ENCODE measurements at regions of chr7 and their contacts with region 1.

Region 1: DNA sequence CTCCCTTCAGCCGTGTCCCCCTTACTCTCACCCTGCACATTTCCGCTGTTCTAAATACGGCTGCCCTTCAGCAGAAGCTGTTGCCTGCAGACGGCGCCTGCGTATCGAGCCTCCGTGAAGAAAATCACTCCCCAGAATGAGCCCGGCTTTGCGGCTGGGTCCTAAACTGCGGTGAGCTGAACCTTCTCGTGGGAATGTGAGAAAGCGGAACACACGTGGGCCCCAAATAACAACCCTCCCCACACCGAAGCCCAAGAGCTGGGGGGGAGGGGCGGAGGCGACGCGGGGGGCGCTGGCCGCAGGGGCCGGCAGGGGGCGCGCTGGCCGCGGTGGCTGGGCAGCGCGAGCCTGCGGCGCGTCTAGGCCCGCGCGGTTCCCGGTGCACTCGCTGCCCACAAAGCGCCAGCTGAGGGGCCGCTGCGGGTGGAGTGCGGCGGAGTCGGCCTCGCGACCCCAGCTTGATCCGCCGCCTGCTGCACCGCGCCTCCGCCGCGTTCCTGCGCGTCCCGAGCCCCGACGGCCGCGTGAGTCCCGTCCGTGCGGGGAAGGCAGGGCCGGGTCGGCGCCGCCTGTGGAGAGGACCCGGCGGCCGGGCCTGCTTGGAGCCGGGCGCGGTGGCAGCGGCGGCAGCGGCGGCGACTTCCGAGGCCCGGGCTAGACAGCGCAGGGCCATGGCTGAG is at the start of gene ZNF398:
- DNase-seq: peak in 1 of 2 experiments; percentile 83
- H3K4me3 ChIP-seq: peak within 1 kb of the TSS; percentile 80 to 91 (median 89)
- H3K27ac ChIP-seq: peak within 1 kb of the TSS; percentile 92
- H3K4me1 ChIP-seq: peaks cover 17 to 31% (median 23%) of the 10 kb centered on the region in 4 experiments; a peak in 6 of 7 replicates
- H3K27me3 ChIP-seq: no peaks in the 10 kb centered on the region
- CTCF ChIP-seq: peak; percentile 66 to 88 (median 82)
- EP300 ChIP-seq: no peak
- POLR2A ChIP-seq: peak in 1 of 2 experiments; percentile 71; a peak in 2 of 3 replicates
- RAD21 ChIP-seq: peak in 1 of 2 experiments; percentile 25; a peak in 2 of 4 replicates
- total RNA-seq, gene ZNF398: 62.2 and 63.5 TPM in 2 replicates

Region 2: GRCh38 chr7:149050941-149051340 is 96.3 kb before region 1 on chr7:
- CTCF ChIA-PET with region 1: no interaction called
- POLR2A ChIA-PET with region 1: no interaction called
- DNase-seq: no peak
- H3K4me3 ChIP-seq: no peak overlapping the region
- H3K27ac ChIP-seq: no peak overlapping the region
- H3K4me1 ChIP-seq: no peaks in the 10 kb centered on the region
- H3K27me3 ChIP-seq: no peaks in the 10 kb centered on the region
- CTCF ChIP-seq: no peak
- EP300 ChIP-seq: no peak
- POLR2A ChIP-seq: no peak
- RAD21 ChIP-seq: no peak

Region 3: DNA sequence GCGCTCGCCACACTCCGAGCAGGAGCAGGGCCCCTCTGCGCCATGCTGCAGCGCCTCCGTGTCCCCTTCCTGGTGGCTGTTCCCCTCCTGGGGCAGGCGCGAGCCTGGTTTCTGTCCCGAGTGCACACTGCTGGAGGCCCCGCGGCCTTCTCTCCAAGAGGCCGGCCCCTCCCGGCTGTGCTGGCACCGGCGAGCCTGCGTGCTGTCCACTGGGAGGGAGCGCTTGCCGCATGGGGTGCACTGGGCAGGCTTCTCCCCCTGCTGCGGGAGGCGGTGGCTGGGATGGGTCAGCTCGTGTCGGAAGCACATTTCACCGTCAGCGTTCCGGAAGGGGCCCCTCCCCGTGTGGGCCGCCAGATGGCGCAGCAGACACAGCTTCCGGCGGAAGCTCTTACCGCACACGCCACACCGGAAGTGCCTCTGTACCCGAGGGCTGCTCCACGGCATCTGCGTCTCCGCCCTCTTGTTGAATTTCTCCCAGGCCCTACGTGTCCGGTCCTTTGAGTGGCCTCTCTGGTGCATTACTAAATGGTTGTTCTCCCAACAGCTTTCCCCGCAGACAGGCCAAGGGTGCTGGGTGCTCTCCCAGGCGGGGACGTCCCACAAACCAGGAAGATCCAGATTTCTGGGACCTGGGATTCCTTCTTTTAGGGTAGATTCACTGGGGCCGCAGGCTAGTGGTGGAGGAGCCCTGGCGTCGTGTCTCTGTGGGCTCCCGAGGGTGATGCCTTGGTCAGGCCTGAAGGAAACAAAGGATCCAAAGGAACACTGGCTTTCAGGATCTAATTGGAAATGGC is 75.4 kb before region 1 on chr7:
- CTCF ChIA-PET with region 1: interaction called, 19 read pairs
- POLR2A ChIA-PET with region 1: interaction called, 3 read pairs
- DNase-seq: peak; percentile 81 to 91
- H3K4me3 ChIP-seq: no peak overlapping the region
- H3K27ac ChIP-seq: peak overlapping the region; percentile 13; the same call in 1 of the 2 replicates
- H3K4me1 ChIP-seq: no peaks in the 10 kb centered on the region; a peak in 1 of 7 replicates
- H3K27me3 ChIP-seq: no peaks in the 10 kb centered on the region
- CTCF ChIP-seq: peak; percentile 86 to 91 (median 86)
- EP300 ChIP-seq: no peak
- POLR2A ChIP-seq: peak in 1 of 2 experiments; percentile 14; a peak in 1 of 3 replicates
- RAD21 ChIP-seq: peak; percentile 72 to 75

Region 4: GRCh38 chr7:149125863-149126661 is 21.1 kb before region 1 on chr7 and contains the start of gene ZNF425:
- CTCF ChIA-PET with region 1: interaction called, 84 read pairs
- POLR2A ChIA-PET with region 1: interaction called, 142 read pairs
- DNase-seq: peak; percentile 73 to 97
- H3K4me3 ChIP-seq: peak within 1 kb of the TSS; percentile 83 to 95 (median 88)
- H3K27ac ChIP-seq: peak within 1 kb of the TSS; percentile 85
- H3K4me1 ChIP-seq: peaks cover 0 to 12% (median 3%) of the 10 kb centered on the region in 4 experiments; a peak in 3 of 7 replicates
- H3K27me3 ChIP-seq: no peaks in the 10 kb centered on the region
- CTCF ChIP-seq: peak; percentile 84 to 98 (median 85)
- EP300 ChIP-seq: peak in 1 of 2 experiments; percentile 64; a peak in 2 of 3 replicates
- POLR2A ChIP-seq: peak; percentile 95
- RAD21 ChIP-seq: peak; percentile 56 to 60
- total RNA-seq, gene ZNF425: 4.0 and 6.1 TPM in 2 replicates

Region 5: GRCh38 chr7:149133028-149133705 is 14.0 kb before region 1 on chr7:
- CTCF ChIA-PET with region 1: interaction called, 84 read pairs
- POLR2A ChIA-PET with region 1: interaction called, 142 read pairs
- DNase-seq: no peak
- H3K4me3 ChIP-seq: no peak overlapping the region
- H3K27ac ChIP-seq: no peak overlapping the region
- H3K4me1 ChIP-seq: peaks cover 0 to 6% (median 0%) of the 10 kb centered on the region in 4 experiments; a peak in 2 of 7 replicates
- H3K27me3 ChIP-seq: no peaks in the 10 kb centered on the region
- CTCF ChIP-seq: no peak
- EP300 ChIP-seq: no peak
- POLR2A ChIP-seq: no peak
- RAD21 ChIP-seq: no peak

Region 6: DNA sequence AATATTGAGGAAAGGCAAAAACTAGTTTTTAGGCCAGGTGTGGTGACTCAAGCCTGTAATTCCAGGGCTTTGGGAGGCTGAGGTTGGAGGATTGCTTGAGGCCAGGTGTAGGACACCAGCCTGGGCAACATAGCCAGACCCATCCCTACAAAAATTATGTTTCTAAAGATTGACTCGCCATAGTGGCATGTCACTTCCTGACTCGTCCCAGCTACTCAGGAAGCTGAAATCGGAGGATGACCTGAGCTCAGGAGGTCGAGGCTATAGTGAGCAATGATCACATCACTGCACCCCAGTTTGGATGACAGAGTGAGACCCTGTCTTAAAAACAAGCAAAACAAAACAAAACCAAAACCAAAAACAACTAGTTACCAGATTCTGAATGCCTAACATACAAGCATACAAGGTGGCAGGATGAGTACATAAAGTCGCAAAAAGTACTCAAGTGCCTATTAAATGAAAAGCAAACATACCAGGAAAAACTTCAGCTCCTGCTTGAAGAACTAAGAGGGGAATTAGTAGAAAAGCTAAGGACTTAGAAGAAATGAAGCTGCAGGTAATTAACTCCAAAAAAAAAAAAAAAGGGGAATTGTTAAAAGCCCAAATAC is 14.1 kb after region 1 on chr7:
- CTCF ChIA-PET with region 1: interaction called, 25 read pairs
- POLR2A ChIA-PET with region 1: interaction called, 138 read pairs
- DNase-seq: no peak
- H3K4me3 ChIP-seq: no peak overlapping the region
- H3K27ac ChIP-seq: no peak overlapping the region
- H3K4me1 ChIP-seq: no peaks in the 10 kb centered on the region
- H3K27me3 ChIP-seq: no peaks in the 10 kb centered on the region
- CTCF ChIP-seq: no peak
- EP300 ChIP-seq: no peak
- POLR2A ChIP-seq: no peak
- RAD21 ChIP-seq: no peak

Region 7: DNA sequence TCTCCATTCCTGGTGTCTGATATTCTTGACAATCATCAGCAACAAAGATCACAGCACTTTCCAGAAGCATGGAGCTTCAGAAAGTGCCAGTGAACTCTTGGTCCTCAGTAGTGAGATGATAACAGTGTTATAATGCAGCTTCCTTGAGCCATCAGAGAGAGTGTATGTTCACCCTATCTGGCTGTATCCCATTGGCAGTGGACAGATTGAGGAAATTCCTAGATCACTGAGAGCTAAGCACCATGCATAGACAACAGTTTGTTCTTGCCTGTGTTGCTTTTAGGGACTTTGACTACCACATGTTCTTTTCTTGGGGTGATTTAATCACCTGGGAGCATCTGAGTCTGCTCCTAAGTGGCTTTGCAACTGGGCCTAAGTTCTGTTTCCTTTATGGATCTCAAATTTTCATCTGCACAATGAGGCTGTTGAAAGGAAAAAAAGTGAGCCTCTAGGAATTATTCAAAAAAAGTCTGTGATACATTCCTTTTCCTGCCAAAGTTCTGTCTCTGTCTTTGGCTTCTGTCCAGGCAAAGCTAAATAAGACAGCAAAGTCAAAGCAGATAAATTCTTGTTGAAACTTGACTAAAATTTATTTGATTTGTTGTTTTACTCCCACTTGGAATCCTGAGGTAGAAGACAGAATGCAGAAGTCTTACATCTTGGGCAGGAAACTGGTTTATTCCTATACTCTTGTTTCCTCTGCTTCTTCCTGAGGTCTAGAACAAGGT is 33.7 kb after region 1 on chr7:
- CTCF ChIA-PET with region 1: interaction called, 4 read pairs
- POLR2A ChIA-PET with region 1: interaction called, 19 read pairs
- DNase-seq: no peak
- H3K4me3 ChIP-seq: no peak overlapping the region
- H3K27ac ChIP-seq: no peak overlapping the region
- H3K4me1 ChIP-seq: no peaks in the 10 kb centered on the region
- H3K27me3 ChIP-seq: no peaks in the 10 kb centered on the region
- CTCF ChIP-seq: no peak
- EP300 ChIP-seq: no peak
- POLR2A ChIP-seq: 0 out of 3 replicates have a peak, but pooled peaks of 1 of the 2 experiments have one; percentile 18
- RAD21 ChIP-seq: no peak

Region 8: DNA sequence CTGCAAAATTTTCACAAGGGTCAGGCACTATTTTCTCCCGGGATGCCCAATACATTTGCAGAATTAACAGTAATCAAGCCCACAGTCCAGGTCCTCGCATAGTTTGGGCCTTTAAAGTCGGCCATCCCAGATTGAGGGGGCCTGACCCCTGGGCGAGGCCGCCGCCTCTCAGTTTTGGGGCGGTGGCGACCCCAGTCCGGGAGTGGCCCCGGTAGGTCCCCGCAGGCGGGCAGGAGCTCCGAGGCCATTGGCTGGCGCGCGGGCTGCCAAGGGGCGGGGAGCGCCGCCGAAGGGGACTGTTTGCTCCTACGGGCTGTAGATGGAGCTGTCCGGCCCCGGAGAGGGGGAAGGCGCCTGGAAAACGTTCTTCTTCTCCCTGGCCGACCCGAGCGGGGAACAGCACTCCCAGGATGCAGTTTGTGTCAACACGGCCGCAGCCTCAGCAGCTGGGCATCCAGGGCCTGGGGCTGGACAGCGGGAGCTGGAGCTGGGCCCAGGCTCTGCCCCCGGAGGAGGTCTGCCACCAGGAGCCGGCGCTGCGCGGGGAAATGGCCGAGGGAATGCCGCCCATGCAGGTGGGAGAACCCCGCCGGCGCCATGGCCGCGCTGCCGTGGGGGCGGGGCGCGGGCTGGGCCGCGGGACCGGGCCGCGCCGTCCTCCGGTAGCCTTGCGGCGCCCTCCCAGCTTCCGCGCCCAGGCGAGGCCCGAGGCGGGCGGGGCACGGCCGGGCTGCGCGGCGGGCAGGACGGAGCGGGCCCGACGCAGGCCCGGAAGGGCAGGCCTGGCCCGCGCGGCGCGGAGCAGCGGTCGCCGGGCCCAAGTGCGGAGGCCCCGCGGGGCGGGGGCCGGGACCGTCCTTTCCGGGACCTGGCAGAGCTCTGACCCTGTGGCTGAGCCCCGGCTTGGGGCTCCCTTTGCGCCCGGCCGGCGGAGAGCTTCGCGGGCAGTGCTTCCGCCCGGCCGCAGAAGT is 48.3 kb after region 1 on chr7 and contains the start of gene ZNF282:
- CTCF ChIA-PET with region 1: no interaction called
- POLR2A ChIA-PET with region 1: interaction called, 22 read pairs
- DNase-seq: peak; percentile 75 to 91
- H3K4me3 ChIP-seq: peak within 1 kb of the TSS; percentile 78 to 94 (median 88)
- H3K27ac ChIP-seq: peak within 1 kb of the TSS; percentile 89
- H3K4me1 ChIP-seq: peaks cover 0 to 5% (median 4%) of the 10 kb centered on the region in 4 experiments; a peak in 5 of 7 replicates
- H3K27me3 ChIP-seq: no peaks in the 10 kb centered on the region
- CTCF ChIP-seq: peak; percentile 64 to 67 (median 67)
- EP300 ChIP-seq: no peak
- POLR2A ChIP-seq: peak; percentile 79 to 87
- RAD21 ChIP-seq: peak; percentile 48 to 50; a peak in 3 of 4 replicates
- total RNA-seq, gene ZNF282: 35.7 and 36.3 TPM in 2 replicates

Measured in H1 (cell line).